ENCODE measurements at regions of chr17 and their contacts with region 1.

Region 1: DNA sequence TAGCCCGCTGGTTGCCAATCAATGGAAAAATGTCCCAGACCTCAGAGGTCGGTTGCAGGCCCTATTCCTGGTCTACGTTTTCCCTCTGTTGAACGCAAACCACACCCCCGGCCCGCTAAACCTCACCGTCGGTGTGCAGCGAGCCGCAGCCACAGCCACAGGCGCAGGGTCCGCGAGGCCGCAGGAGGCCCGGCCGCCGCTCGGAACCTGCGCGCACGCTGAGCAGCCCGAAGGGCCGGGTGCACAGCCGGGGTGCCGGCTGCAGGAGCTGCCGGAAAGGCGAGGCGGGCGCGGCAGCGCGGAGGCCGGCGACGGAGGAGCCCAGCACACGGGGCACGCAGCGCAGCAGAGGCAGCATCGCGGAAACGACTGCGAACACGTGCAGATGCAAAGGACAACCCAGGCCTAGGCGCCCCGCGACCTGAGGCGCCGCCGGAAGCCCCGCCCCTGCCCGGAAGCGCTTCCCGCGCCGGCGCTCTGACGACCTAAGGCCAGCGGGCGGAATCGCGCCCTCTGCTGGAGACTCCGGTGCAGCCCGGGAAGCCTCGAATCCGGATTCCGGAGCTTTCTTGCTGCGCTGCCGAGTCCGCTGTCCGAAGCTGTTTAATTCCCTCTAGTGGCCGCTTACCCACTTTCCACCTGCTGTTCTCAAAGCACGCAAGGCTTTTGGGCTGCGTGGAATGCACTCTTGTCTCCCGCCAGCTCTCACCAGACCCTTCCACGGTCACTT is at the start of gene C1QBP:
- DNase-seq: peak; percentile 91 to 93 (median 92)
- H3K4me3 ChIP-seq: peak within 1 kb of the TSS; percentile 68 to 74
- H3K4me3 Mint-ChIP-seq: peak within 1 kb of the TSS; percentile 83 to 94 (median 88)
- H3K27ac ChIP-seq: peak within 1 kb of the TSS; percentile 80
- H3K27ac Mint-ChIP-seq: peak within 1 kb of the TSS; percentile 91 to 98 (median 95)
- H3K4me1 ChIP-seq: peaks cover 34% of the 10 kb centered on the region
- H3K4me1 Mint-ChIP-seq: peaks cover 21 to 47% (median 30%) of the 10 kb centered on the region in 4 donors
- H3K27me3 ChIP-seq: no peaks in the 10 kb centered on the region
- H3K27me3 Mint-ChIP-seq: no peaks in the 10 kb centered on the region
- total RNA-seq, gene C1QBP: 73.1 to 78.9 TPM

Region 2: DNA sequence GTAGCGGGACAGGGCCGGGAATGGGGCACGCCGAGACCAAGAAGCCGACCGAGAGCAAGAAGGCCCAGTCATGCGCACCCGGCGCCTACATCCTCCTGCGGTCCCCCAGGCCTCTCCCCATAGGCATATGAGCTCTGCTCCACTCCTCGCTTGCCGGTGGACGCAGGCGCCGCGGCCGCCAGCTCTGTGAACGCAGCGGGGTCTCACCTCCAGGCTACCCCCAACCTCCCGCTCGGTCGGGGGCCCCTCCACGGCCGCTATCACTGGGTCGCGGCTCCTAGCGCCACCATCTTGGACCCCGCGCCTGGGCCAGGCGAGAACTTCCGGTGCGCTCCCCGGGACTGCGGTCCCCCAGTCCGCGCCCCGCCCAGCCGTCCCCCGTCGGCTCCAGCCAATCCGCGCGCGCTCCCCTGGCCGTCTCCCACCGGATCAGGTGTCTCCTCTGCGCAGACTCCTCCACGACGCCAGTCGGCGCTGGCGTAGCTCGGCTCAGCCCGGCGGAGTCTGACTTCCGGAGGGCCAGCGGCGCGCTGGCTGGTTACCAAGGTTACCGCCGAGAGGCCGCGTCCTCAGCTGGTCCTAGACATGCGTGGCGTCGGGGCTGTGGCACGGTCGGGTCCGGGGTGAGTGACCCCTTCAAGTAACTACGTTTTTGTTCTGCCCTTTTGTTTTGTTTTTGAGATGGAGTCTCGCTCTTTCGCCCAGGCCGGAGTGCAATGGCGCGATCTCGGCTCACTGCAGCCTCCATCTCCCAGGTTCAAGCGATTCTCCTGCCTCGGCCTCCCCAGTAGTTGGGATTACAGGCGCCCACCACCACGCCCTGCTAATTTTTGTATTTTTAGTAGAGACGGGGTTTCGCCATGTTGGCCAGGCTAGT is 247.1 kb before region 1 on chr17 and contains the start of gene ZNF594:
- CTCF ChIA-PET with region 1: interaction called, 3 read pairs
- POLR2A ChIA-PET with region 1: interaction called, 11 read pairs
- intact Hi-C with region 1: loop called (anchors 1 kb)
- DNase-seq: peak; percentile 95 to 97 (median 96)
- H3K4me3 ChIP-seq: peak within 1 kb of the TSS; percentile 69 to 92
- H3K4me3 Mint-ChIP-seq: peak within 1 kb of the TSS; percentile 92 to 97 (median 94)
- H3K27ac ChIP-seq: peak within 1 kb of the TSS; percentile 68
- H3K27ac Mint-ChIP-seq: peak within 1 kb of the TSS; percentile 90 to 97 (median 93)
- H3K4me1 ChIP-seq: peaks cover 23% of the 10 kb centered on the region
- H3K4me1 Mint-ChIP-seq: peaks cover 17 to 35% (median 25%) of the 10 kb centered on the region in 4 donors
- H3K27me3 ChIP-seq: no peaks in the 10 kb centered on the region
- H3K27me3 Mint-ChIP-seq: no peaks in the 10 kb centered on the region
- total RNA-seq, gene ZNF594: 28.9 to 30.7 TPM

Region 3: GRCh38 chr17:5249615-5250014 is 189.3 kb before region 1 on chr17:
- CTCF ChIA-PET with region 1: interaction called, 12 read pairs
- POLR2A ChIA-PET with region 1: interaction called, 4 read pairs
- intact Hi-C with region 1: loop called (anchors 1 kb)
- DNase-seq: peak; percentile 65 to 73 (median 67)
- H3K4me3 ChIP-seq: no peak overlapping the region
- H3K4me3 Mint-ChIP-seq: peak overlapping the region in 1 of 8 donors; percentile 8
- H3K27ac ChIP-seq: no peak overlapping the region
- H3K27ac Mint-ChIP-seq: peak overlapping the region in 3 of 7 donors; percentile 64 to 94 (median 71)
- H3K4me1 ChIP-seq: peaks cover 7% of the 10 kb centered on the region
- H3K4me1 Mint-ChIP-seq: peaks cover 5 to 8% (median 6%) of the 10 kb centered on the region in 4 donors
- H3K27me3 ChIP-seq: no peaks in the 10 kb centered on the region
- H3K27me3 Mint-ChIP-seq: peaks cover 2% of the 10 kb centered on the region in 2 donors

Region 4: DNA sequence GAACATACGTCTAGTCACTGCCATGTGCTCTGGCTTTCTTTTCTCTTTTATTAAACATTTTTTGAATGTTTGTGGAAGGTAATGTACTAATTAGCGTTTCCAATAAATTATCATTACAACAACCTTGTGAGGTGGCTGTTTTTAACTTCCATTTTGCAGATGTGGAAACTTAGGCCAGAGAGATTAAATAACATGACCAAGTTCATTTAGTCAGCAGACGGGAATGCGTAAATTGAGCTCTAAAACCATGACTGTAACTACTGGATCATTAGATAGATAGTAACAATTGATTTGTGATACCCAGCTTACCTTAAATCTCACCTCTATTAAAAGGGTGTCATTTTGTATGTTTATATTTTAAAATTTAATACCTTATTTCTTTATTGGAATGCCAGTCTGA is 107.4 kb before region 1 on chr17:
- CTCF ChIA-PET with region 1: no interaction called
- POLR2A ChIA-PET with region 1: no interaction called
- intact Hi-C with region 1: no loop called
- DNase-seq: no peak
- H3K4me3 ChIP-seq: no peak overlapping the region
- H3K4me3 Mint-ChIP-seq: no peak overlapping the region
- H3K27ac ChIP-seq: no peak overlapping the region
- H3K27ac Mint-ChIP-seq: peak overlapping the region in 3 of 7 donors; percentile 8 to 77 (median 45)
- H3K4me1 ChIP-seq: peaks cover 26% of the 10 kb centered on the region
- H3K4me1 Mint-ChIP-seq: peaks cover 23 to 41% (median 27%) of the 10 kb centered on the region in 4 donors
- H3K27me3 ChIP-seq: no peaks in the 10 kb centered on the region
- H3K27me3 Mint-ChIP-seq: no peaks in the 10 kb centered on the region

Region 5: GRCh38 chr17:5419356-5419958 is 19.4 kb before region 1 on chr17 and contains the start of gene NUP88:
- CTCF ChIA-PET with region 1: interaction called, 26 read pairs
- POLR2A ChIA-PET with region 1: interaction called, 56 read pairs
- intact Hi-C with region 1: loop called (anchors 1 kb)
- DNase-seq: peak; percentile 92 to 97 (median 95)
- H3K4me3 ChIP-seq: peak within 1 kb of the TSS; percentile 82 to 99
- H3K4me3 Mint-ChIP-seq: peak within 1 kb of the TSS; percentile 97 to 99 (median 99)
- H3K27ac ChIP-seq: peak within 1 kb of the TSS; percentile 96
- H3K27ac Mint-ChIP-seq: peak within 1 kb of the TSS; percentile 97 to 100 (median 99)
- H3K4me1 ChIP-seq: peaks cover 48% of the 10 kb centered on the region
- H3K4me1 Mint-ChIP-seq: peaks cover 20 to 64% (median 40%) of the 10 kb centered on the region in 4 donors
- H3K27me3 ChIP-seq: no peaks in the 10 kb centered on the region
- H3K27me3 Mint-ChIP-seq: peaks cover 0 to 1% of the 10 kb centered on the region in 2 donors
- total RNA-seq, gene NUP88: 91.0 to 92.5 TPM

Region 6: GRCh38 chr17:5468075-5468473 is 29.2 kb after region 1 on chr17:
- CTCF ChIA-PET with region 1: interaction called, 14 read pairs
- POLR2A ChIA-PET with region 1: interaction called, 10 read pairs
- intact Hi-C with region 1: no loop called
- DNase-seq: peak in 2 of 5 donors; percentile 7 to 20
- H3K4me3 ChIP-seq: peak overlapping the region; percentile 33 to 68
- H3K4me3 Mint-ChIP-seq: peak overlapping the region; percentile 80 to 95 (median 88)
- H3K27ac ChIP-seq: peak overlapping the region; percentile 60
- H3K27ac Mint-ChIP-seq: peak overlapping the region; percentile 33 to 94 (median 83)
- H3K4me1 ChIP-seq: peaks cover 18% of the 10 kb centered on the region
- H3K4me1 Mint-ChIP-seq: peaks cover 32 to 50% (median 43%) of the 10 kb centered on the region in 4 donors
- H3K27me3 ChIP-seq: no peaks in the 10 kb centered on the region
- H3K27me3 Mint-ChIP-seq: no peaks in the 10 kb centered on the region

Region 7: DNA sequence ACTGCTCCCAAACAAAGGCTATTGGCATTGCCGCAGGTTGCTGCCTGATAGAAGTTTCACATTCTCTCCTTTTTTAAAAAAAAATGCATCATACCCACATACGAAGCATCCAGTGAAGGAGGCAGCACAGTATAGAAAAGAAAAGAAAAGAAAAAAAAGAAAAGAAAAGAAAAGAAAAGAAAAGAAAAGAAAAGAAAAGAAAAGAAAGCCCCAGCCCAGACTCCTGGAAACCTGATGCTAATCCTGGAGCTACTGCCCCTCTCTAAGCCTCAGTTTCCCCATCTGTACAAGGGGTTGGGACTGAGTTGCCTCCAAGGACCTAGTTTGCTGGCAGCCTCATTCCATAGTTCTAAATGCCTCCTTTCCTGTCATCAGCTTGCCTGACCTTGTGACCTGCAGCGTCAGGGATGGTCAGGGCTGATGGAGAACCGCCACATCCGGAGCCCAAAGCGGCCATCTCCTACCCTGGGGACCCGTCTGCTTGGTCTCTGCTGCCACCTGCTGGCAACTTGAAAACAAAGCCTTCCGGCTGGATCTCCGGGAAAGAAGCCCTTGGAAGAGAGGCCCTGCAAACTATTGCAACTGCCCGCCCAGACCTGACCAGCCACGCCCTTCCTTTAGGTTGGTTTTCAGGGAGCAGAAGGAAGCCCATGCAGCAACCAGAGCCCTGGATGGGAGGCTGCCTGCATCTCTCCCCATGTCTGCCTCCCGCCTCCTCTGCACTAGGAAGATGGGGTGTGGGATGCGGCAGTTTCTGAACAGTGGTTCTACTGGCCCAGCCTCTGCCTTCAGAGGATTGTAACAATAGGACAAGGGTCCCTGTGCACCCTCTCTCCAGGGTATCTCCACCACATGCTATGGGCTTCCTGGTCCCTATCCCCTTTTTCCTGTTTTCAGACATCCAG is 983.1 kb after region 1 on chr17:
- CTCF ChIA-PET with region 1: no interaction called
- POLR2A ChIA-PET with region 1: no interaction called
- intact Hi-C with region 1: loop called (anchors 1 kb)
- DNase-seq: peak; percentile 53 to 62 (median 57)
- H3K4me3 ChIP-seq: no peak overlapping the region
- H3K4me3 Mint-ChIP-seq: no peak overlapping the region
- H3K27ac ChIP-seq: no peak overlapping the region
- H3K27ac Mint-ChIP-seq: peak overlapping the region in 1 of 7 donors; percentile 42
- H3K4me1 ChIP-seq: peaks cover 7% of the 10 kb centered on the region
- H3K4me1 Mint-ChIP-seq: peaks cover 2 to 11% (median 7%) of the 10 kb centered on the region in 4 donors
- H3K27me3 ChIP-seq: peaks cover 4% of the 10 kb centered on the region
- H3K27me3 Mint-ChIP-seq: peaks cover 2 to 14% of the 10 kb centered on the region in 2 donors

Measured in CD4-positive, alpha-beta memory T cell (primary cell).